ENCODE measurements at regions of chr15 and their contacts with region 1.

Region 1: GRCh38 chr15:41930221-41930866 is 36.5 kb upstream of the SPTBN5 start:
- DNase-seq: peak; percentile 89
- H3K4me3 ChIP-seq: no peak overlapping the region
- H3K27ac ChIP-seq: peak overlapping the region; percentile 79
- H3K4me1 ChIP-seq: peaks cover 71% of the 10 kb centered on the region
- H3K27me3 ChIP-seq: no peaks in the 10 kb centered on the region
- CTCF ChIP-seq: peak; percentile 39 to 58

Region 2: DNA sequence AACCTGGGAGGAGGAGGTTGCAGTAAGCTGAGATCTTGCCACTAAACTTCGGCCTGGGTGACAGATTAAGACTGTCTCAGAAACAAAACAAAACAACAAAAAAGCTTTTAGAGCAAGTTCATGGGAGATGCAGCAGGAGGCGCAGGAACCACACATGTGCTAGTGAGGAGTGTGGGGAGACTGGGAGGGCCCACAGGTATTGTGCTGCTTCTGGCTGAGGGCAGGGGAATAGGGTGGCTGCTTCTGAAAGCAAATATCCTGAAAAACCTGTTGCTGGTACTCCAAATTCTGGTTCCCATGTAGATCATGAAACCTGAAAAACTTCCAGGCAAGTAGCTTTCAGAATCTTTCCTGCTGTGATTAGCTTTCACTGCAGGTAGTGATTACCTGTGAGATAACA is 349.2 kb before region 1 on chr15:
- CTCF ChIA-PET with region 1: no interaction called
- dilution Hi-C with region 1: no loop called
- in situ Hi-C with region 1: no loop called
- intact Hi-C with region 1: no loop called
- DNase-seq: peak; percentile 28
- H3K4me3 ChIP-seq: no peak overlapping the region
- H3K27ac ChIP-seq: no peak overlapping the region
- H3K4me1 ChIP-seq: peaks cover 12% of the 10 kb centered on the region
- H3K27me3 ChIP-seq: no peaks in the 10 kb centered on the region
- CTCF ChIP-seq: peak in 1 of 2 donors; percentile 41

Region 3: GRCh38 chr15:41940441-41940857 is 10.1 kb after region 1 on chr15:
- CTCF ChIA-PET with region 1: no interaction called
- dilution Hi-C with region 1: no loop called
- in situ Hi-C with region 1: no loop called
- intact Hi-C with region 1: loop called (anchors 1 kb)
- DNase-seq: peak; percentile 92
- H3K4me3 ChIP-seq: no peak overlapping the region
- H3K27ac ChIP-seq: peak overlapping the region; percentile 41
- H3K4me1 ChIP-seq: peaks cover 76% of the 10 kb centered on the region
- H3K27me3 ChIP-seq: no peaks in the 10 kb centered on the region
- CTCF ChIP-seq: no peak

Region 4: GRCh38 chr15:41972253-41973242 is 42.2 kb after region 1 on chr15 and contains the start of gene EHD4:
- CTCF ChIA-PET with region 1: interaction called, 9 read pairs
- dilution Hi-C with region 1: no loop called
- in situ Hi-C with region 1: no loop called
- intact Hi-C with region 1: loop called (anchors 1 kb)
- DNase-seq: peak; percentile 99
- H3K4me3 ChIP-seq: peak within 1 kb of the TSS; percentile 87 to 98 (median 98)
- H3K27ac ChIP-seq: peak within 1 kb of the TSS; percentile 74
- H3K4me1 ChIP-seq: peaks cover 37% of the 10 kb centered on the region
- H3K27me3 ChIP-seq: no peaks in the 10 kb centered on the region
- CTCF ChIP-seq: peak in 1 of 2 donors; percentile 50
- total RNA-seq, gene EHD4: 53.6 to 65.0 TPM

Region 5: DNA sequence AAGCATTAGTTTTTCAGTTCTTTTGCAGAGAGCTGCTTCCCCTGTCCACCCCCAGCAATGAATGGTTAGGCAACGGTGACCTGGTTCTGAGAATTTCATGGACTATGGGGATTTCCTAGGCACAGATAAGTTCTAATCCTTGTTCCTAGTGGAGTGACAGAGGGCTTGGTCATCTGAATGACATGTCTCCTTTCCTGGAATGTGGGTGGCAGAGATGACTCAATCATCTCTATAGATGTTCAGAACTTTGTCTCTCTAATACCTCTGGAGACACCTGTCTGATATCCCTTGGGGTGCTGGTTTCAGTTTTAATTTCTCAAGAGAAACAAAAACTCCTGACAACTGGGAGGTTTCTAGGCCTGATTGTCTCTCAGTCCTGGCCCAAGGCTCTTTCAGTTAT is 80.1 kb after region 1 on chr15:
- CTCF ChIA-PET with region 1: no interaction called
- dilution Hi-C with region 1: no loop called
- in situ Hi-C with region 1: no loop called
- intact Hi-C with region 1: no loop called
- DNase-seq: peak; percentile 66
- H3K4me3 ChIP-seq: no peak overlapping the region
- H3K27ac ChIP-seq: no peak overlapping the region
- H3K4me1 ChIP-seq: peaks cover 12% of the 10 kb centered on the region
- H3K27me3 ChIP-seq: no peaks in the 10 kb centered on the region
- CTCF ChIP-seq: no peak

Measured in mammary epithelial cell (primary cell).